Psoas muscle (tissue), 8 donors: ENCODE measurements at regions of chr7 and their contacts with region 1.

Region 1: GRCh38 chr7:99040104-99040958 is 103.6 kb downstream of the SMURF1 start:
- DNase-seq: peak; percentile 77 to 87
- ATAC-seq: peak; percentile 79 to 91 (median 86)
- H3K4me3 ChIP-seq: no peak overlapping the region
- H3K27ac ChIP-seq: peak overlapping the region; percentile 47
- H3K4me1 ChIP-seq: no peaks in the 10 kb centered on the region
- H3K27me3 ChIP-seq: no peaks in the 10 kb centered on the region
- CTCF ChIP-seq: peak; percentile 78

Region 2: GRCh38 chr7:99005776-99006175 is 34.6 kb before region 1 on chr7:
- intact Hi-C with region 1: no loop called
- DNase-seq: no peak
- ATAC-seq: no peak
- H3K4me3 ChIP-seq: no peak overlapping the region
- H3K27ac ChIP-seq: no peak overlapping the region
- H3K4me1 ChIP-seq: no peaks in the 10 kb centered on the region
- H3K27me3 ChIP-seq: no peaks in the 10 kb centered on the region
- CTCF ChIP-seq: no peak

Region 3: DNA sequence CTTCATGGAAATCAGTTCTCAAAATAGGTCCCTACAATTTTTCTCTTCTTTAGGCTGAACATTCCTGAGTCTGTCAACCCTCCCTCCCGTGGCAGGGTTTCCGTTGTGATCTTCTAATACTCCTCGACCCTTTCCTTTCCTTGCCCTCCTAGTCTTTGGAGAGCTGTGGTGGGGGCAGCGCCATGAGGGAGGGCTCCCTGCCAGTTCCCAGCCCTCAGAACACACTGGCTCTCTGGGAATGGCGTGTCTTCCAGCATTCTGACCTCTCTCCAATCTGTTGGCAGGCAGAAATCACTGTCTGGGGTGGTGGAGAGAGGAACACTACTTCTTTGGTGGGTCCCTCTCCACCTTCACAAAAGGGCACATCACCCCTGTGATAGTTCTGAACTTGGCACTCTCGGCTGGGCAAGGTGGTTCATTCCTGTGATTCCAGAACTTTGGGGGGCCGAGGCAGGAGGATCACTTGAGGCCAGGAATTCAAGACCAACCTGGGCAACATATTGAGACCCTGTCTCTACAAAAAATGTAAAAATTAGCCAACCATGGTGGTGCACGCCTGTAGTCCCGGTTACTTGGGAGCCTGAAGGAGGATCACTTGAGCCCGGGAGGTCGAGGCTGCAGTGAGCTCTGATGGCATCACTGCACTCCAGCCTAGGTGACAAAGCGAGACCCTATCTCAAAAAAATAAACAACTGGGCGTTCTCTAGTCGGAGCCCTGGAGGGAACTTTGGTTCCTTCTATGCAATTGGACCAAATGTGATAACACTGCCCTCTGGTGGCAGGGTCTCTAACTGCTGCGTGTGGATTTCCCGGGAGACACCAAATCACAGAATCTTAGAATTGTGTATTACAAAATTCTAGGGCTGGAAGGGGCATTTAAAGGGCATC is 272.2 kb after region 1 on chr7:
- intact Hi-C with region 1: loop called (anchors 1 to 2 kb)
- DNase-seq: peak; percentile 60 to 77
- ATAC-seq: peak; percentile 68 to 88 (median 74)
- H3K4me3 ChIP-seq: no peak overlapping the region
- H3K27ac ChIP-seq: no peak overlapping the region
- H3K4me1 ChIP-seq: no peaks in the 10 kb centered on the region
- H3K27me3 ChIP-seq: no peaks in the 10 kb centered on the region
- CTCF ChIP-seq: peak; percentile 92

Region 4: GRCh38 chr7:99392677-99393354 is 352.5 kb after region 1 on chr7:
- intact Hi-C with region 1: no loop called
- DNase-seq: peak; percentile 81 to 90
- ATAC-seq: peak; percentile 82 to 90 (median 88)
- H3K4me3 ChIP-seq: peak overlapping the region; percentile 75
- H3K27ac ChIP-seq: peak overlapping the region; percentile 48
- H3K4me1 ChIP-seq: peaks cover 10% of the 10 kb centered on the region
- H3K27me3 ChIP-seq: no peaks in the 10 kb centered on the region
- CTCF ChIP-seq: no peak